ENCODE measurements at regions of chr4 and their contacts with region 1.

Region 1: GRCh38 chr4:184263910-184264732 is 46.4 kb upstream of the ENPP6 start:
- DNase-seq: peak; percentile 94
- ATAC-seq: peak; percentile 76
- H3K4me3 Mint-ChIP-seq: no peak overlapping the region
- H3K27ac Mint-ChIP-seq: no peak overlapping the region
- H3K4me1 Mint-ChIP-seq: peaks cover 31% of the 10 kb centered on the region
- H3K27me3 Mint-ChIP-seq: no peaks in the 10 kb centered on the region
- CTCF ChIP-seq: peak; percentile 89

Region 2: DNA sequence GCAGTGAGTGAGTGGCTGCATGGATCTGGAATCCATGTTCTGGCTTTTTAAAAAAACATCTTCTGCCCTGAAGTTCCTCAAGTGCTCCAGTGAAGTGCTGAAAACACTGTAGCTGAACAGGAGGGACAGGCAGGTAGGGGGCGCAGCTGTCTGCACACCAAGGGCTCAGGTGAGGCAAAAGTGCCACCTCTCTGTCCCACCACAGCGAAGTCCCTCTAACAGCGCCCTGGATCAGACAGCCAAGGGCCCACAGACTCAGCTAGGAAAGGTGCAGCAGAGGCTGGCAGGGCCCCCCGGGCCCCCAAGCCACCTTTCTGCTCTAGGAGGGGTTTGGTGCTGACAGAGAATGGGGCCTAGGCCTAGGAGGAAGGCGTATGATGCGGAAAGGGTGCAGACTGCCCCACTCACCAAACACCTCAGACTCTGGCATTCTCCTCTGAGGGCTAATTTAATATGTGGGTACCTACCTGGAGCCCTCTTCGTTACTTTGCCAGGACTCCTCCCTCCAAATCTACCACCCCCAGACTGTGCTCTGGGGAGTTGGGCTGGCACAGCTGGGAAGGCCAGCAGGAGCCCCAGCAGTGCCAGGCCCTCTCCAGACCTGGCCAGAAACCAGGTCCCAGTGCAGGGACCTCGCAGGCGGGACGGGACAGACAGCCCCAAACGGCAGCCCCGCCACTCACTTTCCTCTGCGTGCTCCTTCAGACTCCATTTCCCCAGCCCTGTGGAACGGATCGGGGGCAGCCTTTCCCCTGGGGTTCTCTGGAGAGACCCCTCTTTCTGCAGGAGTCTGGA is 120.2 kb before region 1 on chr4:
- CTCF ChIA-PET with region 1: no interaction called
- POLR2A ChIA-PET with region 1: no interaction called
- DNase-seq: peak; percentile 68
- ATAC-seq: peak; percentile 92
- H3K4me3 Mint-ChIP-seq: no peak overlapping the region
- H3K27ac Mint-ChIP-seq: no peak overlapping the region
- H3K4me1 Mint-ChIP-seq: peaks cover 10% of the 10 kb centered on the region
- H3K27me3 Mint-ChIP-seq: peaks cover 5% of the 10 kb centered on the region; the same call in 1 of the 2 replicates
- CTCF ChIP-seq: peak; percentile 42

Region 3: GRCh38 chr4:184168406-184169019 is 95.6 kb before region 1 on chr4:
- CTCF ChIA-PET with region 1: interaction called, 17 read pairs
- POLR2A ChIA-PET with region 1: no interaction called
- DNase-seq: peak; percentile 88
- ATAC-seq: peak; percentile 78
- H3K4me3 Mint-ChIP-seq: peak overlapping the region; percentile 56
- H3K27ac Mint-ChIP-seq: peak overlapping the region; percentile 37; the same call in 1 of the 2 replicates
- H3K4me1 Mint-ChIP-seq: peaks cover 64% of the 10 kb centered on the region
- H3K27me3 Mint-ChIP-seq: peaks cover 8% of the 10 kb centered on the region
- CTCF ChIP-seq: peak; percentile 91

Region 4: DNA sequence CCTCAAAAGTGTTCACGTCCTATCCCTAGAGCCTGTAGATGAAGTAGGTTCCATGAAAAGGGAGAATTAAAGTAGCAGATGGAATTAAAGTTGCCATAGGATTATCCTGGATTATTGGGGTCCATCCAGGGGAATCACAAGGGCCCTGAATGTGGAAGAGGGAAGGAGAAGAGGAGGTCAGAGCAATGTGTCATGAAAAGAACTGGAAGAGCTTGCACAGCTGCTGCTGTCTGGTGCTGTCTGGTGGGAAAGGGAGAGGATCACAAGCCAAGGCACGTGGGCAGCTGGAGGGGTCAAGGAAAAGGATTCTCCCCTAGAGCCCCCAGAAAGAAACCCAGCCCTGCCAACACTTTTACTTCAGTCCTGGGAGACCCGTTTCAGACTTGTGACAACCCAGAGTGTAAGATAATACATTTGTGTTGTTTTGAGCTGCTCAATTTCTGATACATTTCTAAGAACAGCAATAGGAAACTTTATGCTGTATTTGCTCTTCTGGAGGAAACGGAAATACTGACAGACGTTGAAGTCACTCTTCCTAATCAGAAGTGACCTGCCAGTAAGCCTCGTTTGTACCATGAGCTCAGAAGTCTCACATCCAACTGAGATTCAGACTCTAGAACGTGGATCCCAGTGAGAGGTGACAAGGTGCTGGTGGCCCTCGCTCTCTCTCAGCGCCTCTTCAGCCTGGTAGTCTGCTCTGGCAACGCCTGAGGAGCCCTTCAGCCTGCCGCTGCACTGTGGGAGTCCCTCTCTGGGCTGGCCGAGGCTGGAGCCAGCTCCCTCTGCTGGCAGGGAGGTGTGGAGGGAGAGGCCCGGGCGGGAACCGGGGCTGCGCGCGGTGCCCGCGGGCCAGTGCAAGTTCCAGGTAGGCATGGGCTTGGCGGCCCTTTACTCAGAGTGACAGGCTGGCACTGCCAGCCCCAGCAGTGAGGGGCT is 11.7 kb before region 1 on chr4:
- CTCF ChIA-PET with region 1: interaction called, 10 read pairs
- POLR2A ChIA-PET with region 1: no interaction called
- DNase-seq: no peak
- ATAC-seq: no peak
- H3K4me3 Mint-ChIP-seq: no peak overlapping the region
- H3K27ac Mint-ChIP-seq: no peak overlapping the region
- H3K4me1 Mint-ChIP-seq: no peaks in the 10 kb centered on the region
- H3K27me3 Mint-ChIP-seq: peaks cover 9% of the 10 kb centered on the region
- CTCF ChIP-seq: no peak

Region 5: DNA sequence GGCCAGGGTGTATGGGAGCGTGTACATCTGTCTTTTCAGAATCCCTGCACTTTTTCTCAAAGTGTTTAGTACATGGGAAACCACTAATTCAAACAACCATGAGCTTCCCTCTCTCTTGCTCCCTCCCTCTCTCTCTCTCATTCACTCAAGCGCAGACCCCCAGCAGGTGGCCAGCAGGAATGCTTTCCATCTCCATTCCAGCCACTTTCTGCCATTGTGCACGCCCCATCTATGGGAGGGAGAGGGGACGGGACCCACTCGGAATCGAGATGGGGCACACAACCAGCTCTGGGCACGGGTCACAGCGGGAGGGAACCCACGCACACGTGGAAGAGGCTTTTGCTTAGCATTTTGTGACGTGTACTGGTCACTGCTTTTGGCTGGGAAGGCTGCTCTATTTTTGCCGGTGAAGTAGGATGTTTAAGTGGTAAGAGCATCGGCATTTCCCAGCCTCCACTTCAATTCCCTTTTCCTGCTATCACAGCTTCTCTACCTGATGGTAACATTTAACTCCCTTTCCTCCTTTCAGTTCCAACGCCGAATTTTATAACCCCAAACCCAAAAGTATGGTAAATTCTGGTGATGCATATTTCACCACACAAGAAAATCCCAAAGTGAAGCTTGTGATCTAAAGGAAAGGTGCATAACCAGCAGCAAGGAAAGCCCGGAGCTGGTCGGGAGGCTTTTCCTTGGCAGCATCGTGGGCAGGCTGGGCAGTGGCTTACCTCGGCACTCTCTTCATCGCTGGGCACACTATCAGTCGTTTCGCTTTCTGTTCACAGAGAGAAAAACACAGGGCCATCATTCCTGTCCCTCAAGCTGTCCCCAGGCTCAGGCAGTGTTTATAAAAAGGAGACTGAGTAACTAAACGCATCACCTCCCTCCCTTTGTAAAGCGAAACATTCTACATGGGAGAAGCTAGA is 126.1 kb after region 1 on chr4:
- CTCF ChIA-PET with region 1: interaction called, 15 read pairs
- POLR2A ChIA-PET with region 1: no interaction called
- DNase-seq: peak; percentile 70
- ATAC-seq: peak; percentile 54
- H3K4me3 Mint-ChIP-seq: peak overlapping the region; percentile 51
- H3K27ac Mint-ChIP-seq: peak overlapping the region; percentile 95
- H3K4me1 Mint-ChIP-seq: peaks cover 64% of the 10 kb centered on the region
- H3K27me3 Mint-ChIP-seq: no peaks in the 10 kb centered on the region
- CTCF ChIP-seq: no peak

Region 6: DNA sequence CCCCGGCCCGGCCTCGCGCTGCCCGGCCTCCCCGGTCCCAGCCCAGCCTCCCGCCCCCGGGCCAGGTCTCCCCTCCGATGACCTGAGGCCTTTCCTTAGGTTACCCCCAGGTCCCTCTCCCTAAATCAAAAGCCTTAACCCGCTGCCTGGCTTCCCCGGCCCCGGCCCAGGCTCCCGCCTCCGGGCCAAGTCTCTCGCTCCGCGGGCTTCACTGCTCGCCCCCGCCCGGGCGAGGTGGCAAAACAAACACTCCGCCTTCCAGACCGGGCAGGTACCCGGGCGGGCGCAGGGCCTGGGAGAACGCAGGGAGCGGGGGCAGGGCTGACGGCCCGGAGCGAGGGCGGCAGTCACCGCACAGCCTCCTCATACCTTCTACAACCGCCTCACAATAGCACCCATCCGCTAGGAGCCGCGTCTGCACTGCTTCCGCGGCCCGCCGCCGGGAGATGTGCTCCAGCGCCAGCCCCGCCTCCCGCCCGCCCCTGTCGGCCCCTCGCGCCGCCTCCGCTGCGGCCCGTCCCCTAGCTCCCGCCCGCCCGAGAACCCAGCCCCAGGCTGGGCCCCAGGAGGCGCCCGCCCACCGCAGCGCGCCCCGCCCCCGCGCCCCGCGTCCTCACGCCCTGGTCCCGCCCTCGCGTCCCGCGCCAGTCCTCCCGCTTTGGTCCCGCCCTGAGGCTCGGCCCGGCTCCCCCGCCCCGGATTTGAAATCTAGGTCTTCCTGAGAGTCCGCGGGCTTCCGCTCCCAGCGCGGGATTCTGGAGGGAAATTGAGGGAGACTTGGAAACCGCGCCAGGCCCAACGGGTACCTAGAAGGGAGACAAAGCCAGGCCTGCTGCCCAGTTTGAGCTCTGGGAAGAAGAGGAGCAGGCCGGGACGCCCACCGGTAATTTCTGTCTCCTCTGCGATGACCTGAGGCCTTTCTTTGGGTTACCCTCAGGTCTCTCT is 385.2 kb after region 1 on chr4 and contains the starts of genes CASP3 and PRIMPOL:
- CTCF ChIA-PET with region 1: interaction called, 12 read pairs
- POLR2A ChIA-PET with region 1: no interaction called
- DNase-seq: peak; percentile 95
- ATAC-seq: peak; percentile 90
- H3K4me3 Mint-ChIP-seq: peak within 1 kb of the TSS; percentile 88
- H3K27ac Mint-ChIP-seq: peak within 1 kb of the TSS; percentile 96
- H3K4me1 Mint-ChIP-seq: peaks cover 67% of the 10 kb centered on the region
- H3K27me3 Mint-ChIP-seq: no peaks in the 10 kb centered on the region
- CTCF ChIP-seq: no peak
- total RNA-seq, gene CASP3: 54.2 to 78.9 TPM (median 63.2 TPM) in 3 replicates
- total RNA-seq, gene PRIMPOL: 8.3 to 13.4 TPM (median 9.6 TPM) in 3 replicates